ENCODE measurements at regions of chr17 and their contacts with region 1.

Region 1: GRCh38 chr17:43517615-43518386 is 28.3 kb downstream of the ETV4 start:
- DNase-seq: no peak
- H3K4me3 ChIP-seq: no peak overlapping the region
- H3K27ac ChIP-seq: no peak overlapping the region
- H3K4me1 ChIP-seq: no peaks in the 10 kb centered on the region
- H3K27me3 ChIP-seq: no peaks in the 10 kb centered on the region
- CTCF ChIP-seq: no peak

Region 2: GRCh38 chr17:42629411-42630009 is 888.3 kb before region 1 on chr17:
- CTCF ChIA-PET with region 1: no interaction called
- POLR2A ChIA-PET with region 1: no interaction called
- intact Hi-C with region 1: no loop called
- DNase-seq: peak in 1 of 2 experiments; percentile 42
- H3K4me3 ChIP-seq: no peak overlapping the region
- H3K27ac ChIP-seq: no peak overlapping the region
- H3K4me1 ChIP-seq: peaks cover 3% of the 10 kb centered on the region
- H3K27me3 ChIP-seq: no peaks in the 10 kb centered on the region
- CTCF ChIP-seq: no peak

Region 3: GRCh38 chr17:43667947-43668348 is 150.1 kb after region 1 on chr17:
- CTCF ChIA-PET with region 1: interaction called, 18 read pairs
- POLR2A ChIA-PET with region 1: no interaction called
- intact Hi-C with region 1: no loop called
- DNase-seq: peak; percentile 72 to 76
- H3K4me3 ChIP-seq: peak overlapping the region; percentile 19; the same call in 1 of the 2 replicates
- H3K27ac ChIP-seq: peak overlapping the region; percentile 66
- H3K4me1 ChIP-seq: peaks cover 49% of the 10 kb centered on the region
- H3K27me3 ChIP-seq: no peaks in the 10 kb centered on the region
- CTCF ChIP-seq: no peak

Region 4: GRCh38 chr17:43680461-43680860 is 162.7 kb after region 1 on chr17:
- CTCF ChIA-PET with region 1: interaction called, 3 read pairs
- POLR2A ChIA-PET with region 1: interaction called, 11 read pairs
- intact Hi-C with region 1: no loop called
- DNase-seq: no peak
- H3K4me3 ChIP-seq: no peak overlapping the region
- H3K27ac ChIP-seq: no peak overlapping the region
- H3K4me1 ChIP-seq: peaks cover 9% of the 10 kb centered on the region
- H3K27me3 ChIP-seq: no peaks in the 10 kb centered on the region
- CTCF ChIP-seq: no peak

Measured in PC-9 (cell line).